Transverse colon (tissue), 4 donors: ENCODE measurements at regions of chr11 and their contacts with region 1.

Region 1: DNA sequence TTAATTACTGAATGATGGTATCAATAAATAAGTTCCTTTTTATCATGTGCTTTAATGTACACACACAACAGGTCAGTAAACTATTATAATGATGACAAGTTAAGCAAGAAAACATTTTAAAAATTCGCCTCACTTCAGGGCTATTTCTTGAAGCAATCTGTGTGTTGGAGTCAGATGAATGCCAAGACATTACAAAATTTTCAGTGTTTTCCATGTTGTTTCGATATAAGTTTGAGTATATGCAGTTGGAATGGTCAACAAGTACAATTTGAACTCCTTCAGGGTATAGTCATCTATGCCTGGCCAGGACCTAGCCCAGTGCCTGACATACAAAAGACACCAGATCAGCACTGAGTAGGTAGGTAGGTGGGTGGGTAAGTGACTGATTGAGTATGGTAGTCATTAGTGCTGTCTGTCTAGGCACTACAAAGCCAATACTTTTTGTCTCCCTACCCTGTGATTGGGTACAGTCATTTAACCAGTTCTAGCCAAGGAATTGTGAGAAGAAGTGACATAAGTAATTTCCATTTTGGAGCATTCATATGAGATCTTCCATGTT is 7.5 kb downstream of the PRCP start:
- DNase-seq: no peak
- H3K4me3 ChIP-seq: no peak overlapping the region
- H3K27ac ChIP-seq: no peak overlapping the region
- H3K4me1 ChIP-seq: peaks cover 0 to 21% (median 1%) of the 10 kb centered on the region in 4 donors
- H3K27me3 ChIP-seq: no peaks in the 10 kb centered on the region
- CTCF ChIP-seq: no peak
- EP300 ChIP-seq: no peak
- POLR2A ChIP-seq: no peak

Region 2: GRCh38 chr11:82533628-82534327 is 358.9 kb before region 1 on chr11:
- in situ Hi-C with region 1: no loop called
- intact Hi-C with region 1: no loop called
- DNase-seq: no peak
- H3K4me3 ChIP-seq: no peak overlapping the region
- H3K27ac ChIP-seq: no peak overlapping the region
- H3K4me1 ChIP-seq: no peaks in the 10 kb centered on the region
- H3K27me3 ChIP-seq: no peaks in the 10 kb centered on the region
- CTCF ChIP-seq: no peak
- EP300 ChIP-seq: no peak
- POLR2A ChIP-seq: no peak

Region 3: DNA sequence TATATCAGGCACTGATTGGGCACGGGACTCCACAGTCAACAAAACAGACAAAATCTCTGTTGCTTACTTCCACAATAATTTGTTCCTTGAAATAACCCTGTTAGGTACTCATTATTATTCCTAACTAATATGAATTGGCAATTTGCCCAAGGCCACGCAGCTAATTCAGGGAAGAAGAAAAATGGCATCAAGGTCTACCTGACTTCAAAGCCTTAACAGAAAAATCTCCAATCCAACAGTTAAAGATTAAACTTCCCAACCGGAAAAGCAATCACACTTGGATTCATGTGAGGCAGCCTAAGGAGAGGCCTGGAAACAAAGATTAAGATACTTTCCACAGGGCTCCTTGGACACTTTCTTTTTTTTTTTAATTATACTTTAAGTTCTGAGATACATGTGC is 61.3 kb before region 1 on chr11:
- in situ Hi-C with region 1: no loop called
- intact Hi-C with region 1: loop called (anchors 2 kb)
- DNase-seq: no peak
- H3K4me3 ChIP-seq: no peak overlapping the region
- H3K27ac ChIP-seq: no peak overlapping the region
- H3K4me1 ChIP-seq: no peaks in the 10 kb centered on the region
- H3K27me3 ChIP-seq: no peaks in the 10 kb centered on the region
- CTCF ChIP-seq: no peak
- EP300 ChIP-seq: no peak
- POLR2A ChIP-seq: no peak